Mucosa of descending colon (tissue), 3 donors: ENCODE measurements at regions of chr7 and their contacts with region 1.

Region 1: DNA sequence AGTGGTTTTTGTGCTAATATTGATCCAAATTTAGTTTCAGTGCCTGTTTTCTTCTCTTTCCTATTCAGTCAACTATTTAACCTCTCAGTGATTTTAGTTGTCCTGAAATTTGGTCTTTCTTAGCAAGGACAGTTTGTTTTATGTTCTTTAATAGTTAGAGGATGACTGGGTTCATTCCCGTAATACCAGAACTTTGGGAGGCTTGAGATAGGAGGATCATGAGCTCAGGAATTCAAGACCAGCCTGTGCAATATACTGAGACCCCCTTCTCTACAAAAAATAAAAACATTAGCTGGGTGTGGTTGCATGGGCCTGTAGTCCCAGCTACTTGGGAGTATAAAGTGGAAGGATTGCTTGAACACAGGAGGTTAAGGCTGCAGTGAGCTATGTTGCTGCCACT is 148.3 kb downstream of the EXOC4 start:
- DNase-seq: no peak
- ATAC-seq: no peak
- H3K4me3 ChIP-seq: no peak overlapping the region
- H3K4me1 ChIP-seq: no peaks in the 10 kb centered on the region
- CTCF ChIP-seq: no peak

Region 2: GRCh38 chr7:134254311-134254710 is 853.1 kb after region 1 on chr7:
- intact Hi-C with region 1: loop called in 1 of 2 experiments (anchors 10 kb)
- DNase-seq: no peak
- ATAC-seq: no peak
- H3K4me3 ChIP-seq: no peak overlapping the region
- H3K4me1 ChIP-seq: no peaks in the 10 kb centered on the region
- CTCF ChIP-seq: no peak